GM10248 (cell line): ENCODE measurements at regions of chr11 and their contacts with region 1.

Region 1: GRCh38 chr11:30322826-30323710 is at the start of gene ARL14EP:
- DNase-seq: peak; percentile 88
- CTCF ChIP-seq: no peak

Region 2: GRCh38 chr11:30196400-30197206 is 126.5 kb before region 1 on chr11:
- CTCF ChIA-PET with region 1: interaction called, 13 read pairs
- POLR2A ChIA-PET with region 1: no interaction called
- DNase-seq: peak; percentile 27
- CTCF ChIP-seq: peak; percentile 80

Region 3: DNA sequence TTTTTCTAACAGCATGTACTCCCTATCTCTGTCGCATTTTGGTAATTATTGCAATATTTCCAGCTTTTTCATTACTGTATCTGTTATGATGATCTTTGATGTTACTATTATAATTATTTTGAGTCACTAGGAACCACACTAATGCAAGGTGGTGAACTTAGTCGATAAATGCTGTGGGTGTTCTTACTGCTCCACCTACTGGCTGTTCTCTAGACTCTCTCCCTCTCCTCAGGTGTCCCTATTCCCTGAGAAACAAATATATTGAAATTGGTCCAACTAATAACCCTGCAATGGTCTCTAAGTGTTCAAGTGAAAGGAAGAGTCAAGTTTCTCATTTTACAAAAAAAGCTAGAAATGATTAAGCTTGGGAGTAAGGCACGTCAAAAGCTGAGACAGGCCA is 10.3 kb after region 1 on chr11:
- CTCF ChIA-PET with region 1: interaction called, 18 read pairs
- POLR2A ChIA-PET with region 1: interaction called, 4 read pairs
- DNase-seq: no peak
- CTCF ChIP-seq: peak; percentile 44

Region 4: DNA sequence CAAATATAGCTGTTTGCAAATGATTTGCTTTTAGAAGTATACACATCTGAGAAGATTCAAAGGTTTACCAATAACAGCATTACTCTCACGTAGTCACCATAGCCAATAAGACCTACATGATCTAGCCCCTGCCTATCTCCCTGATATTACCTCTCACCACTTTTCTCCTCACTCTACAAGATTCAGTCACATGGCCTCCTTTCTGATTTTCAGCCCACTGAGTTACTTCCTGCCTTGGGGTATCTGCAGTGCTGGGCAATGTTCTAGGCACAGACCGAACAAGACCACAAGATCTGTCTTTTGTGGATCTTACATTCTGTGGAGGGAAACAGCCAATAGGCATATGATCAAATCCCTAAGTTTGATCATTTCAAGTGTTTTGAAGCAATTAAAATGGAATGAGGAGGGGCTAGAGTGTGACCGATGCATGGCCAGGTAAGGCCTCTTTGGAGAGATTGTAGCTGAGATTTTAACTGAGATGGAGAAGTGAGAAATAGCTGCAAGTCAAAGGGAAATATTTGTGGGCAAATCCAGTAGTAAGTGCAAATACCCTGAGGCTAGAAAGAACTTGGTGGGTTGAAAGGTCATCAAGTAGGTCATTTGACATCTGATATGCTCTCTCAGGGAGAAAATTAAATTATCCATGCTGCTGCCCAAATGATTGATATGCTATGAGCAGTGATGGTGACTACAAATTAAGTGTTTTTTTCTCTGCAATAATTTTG is 42.9 kb after region 1 on chr11:
- CTCF ChIA-PET with region 1: no interaction called
- POLR2A ChIA-PET with region 1: no interaction called
- DNase-seq: no peak
- CTCF ChIP-seq: no peak